GM12878 (cell line): ENCODE measurements at regions of chr12 and their contacts with region 1.

Region 1: DNA sequence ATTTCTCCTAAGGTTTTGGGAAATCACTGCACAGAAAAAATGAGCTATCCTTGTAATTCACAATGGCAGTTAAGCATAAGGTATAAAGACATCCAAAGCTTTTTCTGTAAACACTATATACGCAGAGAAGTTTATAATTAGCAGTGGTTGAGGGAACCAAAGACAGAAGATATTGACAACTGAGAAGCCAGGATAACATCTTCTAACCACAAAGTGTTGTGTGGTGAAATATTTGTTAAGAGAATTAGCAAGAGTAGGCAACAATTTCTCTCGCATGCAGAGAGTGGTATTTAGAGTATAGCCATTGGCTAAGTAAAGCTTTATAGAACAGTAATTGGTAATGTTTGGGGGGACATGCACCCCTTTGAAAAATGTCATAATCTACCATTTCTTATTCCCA is 123.7 kb upstream of the USP15 start:
- DNase-seq: no peak
- ATAC-seq: no peak
- H3K4me3 ChIP-seq: no peak overlapping the region
- H3K27ac ChIP-seq: no peak overlapping the region
- H3K4me1 ChIP-seq: no peaks in the 10 kb centered on the region
- H3K27me3 ChIP-seq: no peaks in the 10 kb centered on the region
- CTCF ChIP-seq: no peak
- EP300 ChIP-seq: no peak
- POLR2A ChIP-seq: no peak
- RAD21 ChIP-seq: no peak

Region 2: GRCh38 chr12:62123721-62124203 is 12.7 kb before region 1 on chr12:
- CTCF ChIA-PET with region 1: interaction called, 10 read pairs
- POLR2A ChIA-PET with region 1: no interaction called
- RAD21 ChIA-PET with region 1: no interaction called
- SMC1A ChIA-PET with region 1: no interaction called
- in situ Hi-C with region 1: no loop called
- intact Hi-C with region 1: no loop called
- DNase-seq: no peak
- ATAC-seq: peak; percentile 88
- H3K4me3 ChIP-seq: no peak overlapping the region
- H3K27ac ChIP-seq: no peak overlapping the region
- H3K4me1 ChIP-seq: no peaks in the 10 kb centered on the region
- H3K27me3 ChIP-seq: no peaks in the 10 kb centered on the region
- CTCF ChIP-seq: peak; percentile 73 to 82 (median 82)
- EP300 ChIP-seq: no peak
- POLR2A ChIP-seq: no peak
- RAD21 ChIP-seq: peak; percentile 63